Heart left ventricle (tissue), 16 donors: ENCODE measurements at regions of chr9 and their contacts with region 1.

Region 1: GRCh38 chr9:33721674-33722358 is 73.5 kb upstream of the PRSS3 start:
- DNase-seq: peak; percentile 76 to 91 (median 86)
- ATAC-seq: peak; percentile 51 to 87 (median 82)
- H3K4me3 ChIP-seq: no peak overlapping the region
- H3K27ac ChIP-seq: no peak overlapping the region
- H3K4me1 ChIP-seq: peaks cover 0 to 15% (median 0%) of the 10 kb centered on the region in 12 donors
- H3K27me3 ChIP-seq: peaks cover 0 to 5% (median 0%) of the 10 kb centered on the region in 9 donors
- CTCF ChIP-seq: peak; percentile 100
- POLR2A ChIP-seq: no peak

Region 2: DNA sequence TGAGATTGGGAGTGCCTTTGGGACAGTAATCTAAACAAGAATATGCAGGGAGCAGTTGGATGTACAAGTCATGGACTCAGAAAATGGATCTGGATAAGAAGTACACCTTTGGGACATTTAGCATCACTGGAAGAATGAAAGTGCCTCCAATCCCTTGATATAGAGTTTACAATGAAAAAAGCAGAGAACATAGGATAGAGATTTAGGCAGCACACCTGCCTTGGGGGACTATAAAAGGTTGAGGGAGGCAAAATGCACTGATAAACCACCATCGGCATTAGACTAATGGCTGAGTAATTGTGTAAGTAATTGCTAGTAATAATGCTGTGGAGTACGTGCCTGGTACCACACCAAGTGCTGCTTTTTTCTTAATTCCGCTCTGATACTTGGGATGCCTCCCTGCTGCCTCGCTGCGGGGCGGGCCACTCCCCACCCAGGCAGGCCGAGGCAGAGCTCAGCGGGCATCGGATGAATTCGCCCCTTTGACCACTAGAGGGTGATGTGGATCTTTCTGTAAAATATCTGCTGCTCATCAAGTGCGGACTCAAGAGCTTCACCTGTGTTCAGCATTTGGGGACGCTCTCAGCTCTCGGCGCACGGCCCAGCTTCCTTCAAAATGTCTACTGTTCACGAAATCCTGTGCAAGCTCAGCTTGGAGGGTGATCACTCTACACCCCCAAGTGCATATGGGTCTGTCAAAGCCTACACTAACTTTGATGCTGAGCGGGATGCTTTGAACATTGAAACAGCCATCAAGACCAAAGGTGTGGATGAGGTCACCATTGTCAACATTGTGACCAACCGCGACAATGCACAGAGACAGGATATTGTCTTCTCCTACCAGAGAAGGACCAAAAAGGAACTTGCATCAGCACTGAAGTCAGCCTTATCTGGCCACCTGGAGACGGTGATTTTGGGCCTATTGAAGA is 97.9 kb before region 1 on chr9:
- intact Hi-C with region 1: loop called in 9 of 10 experiments (anchors 1 to 2 kb)
- DNase-seq: peak in 4 of 5 donors; percentile 40 to 64 (median 53)
- ATAC-seq: peak; percentile 58 to 92 (median 87)
- H3K4me3 ChIP-seq: no peak overlapping the region
- H3K27ac ChIP-seq: no peak overlapping the region
- H3K4me1 ChIP-seq: peaks cover 0 to 3% (median 0%) of the 10 kb centered on the region in 12 donors
- H3K27me3 ChIP-seq: peaks cover 0 to 21% (median 0%) of the 10 kb centered on the region in 9 donors
- CTCF ChIP-seq: peak; percentile 77 to 89 (median 85)
- POLR2A ChIP-seq: no peak

Region 3: DNA sequence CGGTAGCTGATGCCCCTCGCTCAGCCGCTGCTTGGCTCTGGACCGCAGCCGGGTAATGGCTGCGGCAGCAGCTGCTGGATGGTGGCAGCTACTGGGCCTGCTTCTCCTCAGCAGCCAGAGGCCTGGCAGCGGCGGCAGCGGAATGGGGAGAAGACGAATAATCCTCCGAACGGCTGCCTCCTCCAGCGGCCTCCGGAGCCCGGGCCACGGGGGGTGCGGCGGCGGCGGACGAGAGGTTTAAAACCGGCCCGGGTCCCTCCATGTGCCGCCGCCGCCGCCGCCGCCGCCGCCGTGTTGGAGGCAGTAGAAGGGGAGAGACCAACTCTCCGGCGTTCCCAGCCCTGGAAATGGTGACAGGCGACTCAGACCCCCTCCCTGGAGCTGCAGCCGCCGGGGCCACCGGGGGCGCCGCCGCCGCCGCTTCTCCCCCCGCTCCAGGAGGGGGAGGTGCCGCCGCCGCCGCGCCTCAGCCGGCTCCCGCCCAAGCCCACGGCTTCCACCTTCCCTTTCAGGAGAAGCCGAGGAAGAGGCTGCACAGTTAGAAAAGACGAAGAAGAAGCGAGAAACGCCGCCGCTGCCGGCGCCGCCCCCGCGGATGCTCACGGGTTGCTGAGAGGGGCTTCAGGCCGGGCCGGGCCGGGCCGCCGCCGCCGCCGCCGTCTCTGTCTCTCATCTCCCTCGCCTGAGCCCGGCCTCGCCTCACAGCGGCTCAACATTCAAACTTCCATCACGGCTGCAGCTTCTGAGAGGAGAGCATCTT is 44.9 kb before region 1 on chr9:
- intact Hi-C with region 1: loop called in 1 of 10 experiments (anchors 5 kb)
- DNase-seq: peak; percentile 19 to 67 (median 28)
- ATAC-seq: peak in 3 of 4 donors; percentile 74 to 94 (median 88)
- H3K4me3 ChIP-seq: peak overlapping the region; percentile 51 to 83 (median 58)
- H3K27ac ChIP-seq: peak overlapping the region in 11 of 12 donors; percentile 27 to 86 (median 55)
- H3K4me1 ChIP-seq: peaks cover 0 to 9% (median 0%) of the 10 kb centered on the region in 12 donors
- H3K27me3 ChIP-seq: peaks cover 0 to 60% (median 0%) of the 10 kb centered on the region in 9 donors
- CTCF ChIP-seq: no peak
- POLR2A ChIP-seq: no peak

Region 4: DNA sequence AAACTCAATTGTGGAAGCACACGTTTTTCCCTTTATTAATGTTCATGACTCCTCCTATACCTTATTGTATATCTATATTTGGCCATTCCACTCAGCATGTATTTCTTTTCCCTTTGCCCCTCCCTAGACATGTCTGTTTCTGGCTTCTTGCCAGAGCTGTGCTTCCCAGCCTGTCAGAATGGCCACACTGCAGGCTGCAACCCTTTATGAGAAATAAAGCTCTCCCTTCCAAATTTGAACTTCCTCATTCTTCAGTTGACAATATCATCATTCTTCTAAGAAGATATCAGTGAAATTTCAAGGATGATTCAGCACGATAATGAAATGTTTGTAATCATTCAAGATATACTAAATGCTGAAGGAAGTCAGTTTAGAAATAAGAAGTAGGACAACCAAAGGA is 34.0 kb before region 1 on chr9:
- intact Hi-C with region 1: no loop called
- DNase-seq: no peak
- ATAC-seq: no peak
- H3K4me3 ChIP-seq: no peak overlapping the region
- H3K27ac ChIP-seq: no peak overlapping the region
- H3K4me1 ChIP-seq: no peaks in the 10 kb centered on the region
- H3K27me3 ChIP-seq: no peaks in the 10 kb centered on the region
- CTCF ChIP-seq: no peak
- POLR2A ChIP-seq: no peak